Activated CD8-positive, alpha-beta T cell treated with anti-CD3 and anti-CD28 coated beads, Interleukin-2, amount 10 ng/mL, durations not matched to agents 7 days and 5 days (primary cell): ENCODE measurements at regions of chr6 and their contacts with region 1.

Region 1: GRCh38 chr6:24720604-24721460 is 1.9 kb upstream of the C6orf62 start:
- DNase-seq: peak; percentile 100
- ATAC-seq: peak; percentile 90
- H3K4me3 Mint-ChIP-seq: peak overlapping the region; percentile 98
- H3K27ac Mint-ChIP-seq: peak overlapping the region; percentile 99
- H3K4me1 Mint-ChIP-seq: peaks cover 27% of the 10 kb centered on the region
- H3K27me3 Mint-ChIP-seq: no peaks in the 10 kb centered on the region

Region 2: DNA sequence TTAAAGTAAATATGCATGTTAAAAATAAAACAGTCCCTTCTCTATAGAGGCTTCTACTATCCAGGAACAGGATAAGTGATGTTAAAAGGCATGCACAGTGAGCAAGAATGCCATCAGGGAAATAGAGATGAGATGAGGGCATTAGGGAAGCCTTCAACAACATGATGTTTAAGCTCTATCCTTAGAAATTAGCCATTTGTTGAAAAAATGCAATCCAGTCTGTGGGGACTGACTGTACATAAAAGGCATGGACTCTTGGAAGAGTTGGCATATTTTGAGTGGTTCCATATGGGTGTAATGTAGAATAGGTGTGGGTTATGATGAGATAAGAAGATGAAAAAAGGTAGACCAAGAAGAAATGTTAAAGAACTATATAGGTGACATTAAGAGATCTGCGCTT is 80.7 kb before region 1 on chr6:
- CTCF ChIA-PET with region 1: no interaction called
- POLR2A ChIA-PET with region 1: no interaction called
- DNase-seq: no peak
- ATAC-seq: no peak
- H3K4me3 Mint-ChIP-seq: no peak overlapping the region
- H3K27ac Mint-ChIP-seq: no peak overlapping the region
- H3K4me1 Mint-ChIP-seq: peaks cover 4% of the 10 kb centered on the region
- H3K27me3 Mint-ChIP-seq: peaks cover 45% of the 10 kb centered on the region

Region 3: GRCh38 chr6:24666641-24667377 is 54.0 kb before region 1 on chr6 and contains the starts of genes ACOT13 and TDP2:
- CTCF ChIA-PET with region 1: interaction called, 8 read pairs
- POLR2A ChIA-PET with region 1: interaction called, 17 read pairs
- DNase-seq: peak; percentile 97
- ATAC-seq: peak; percentile 96
- H3K4me3 Mint-ChIP-seq: peak within 1 kb of the TSS; percentile 98
- H3K27ac Mint-ChIP-seq: peak within 1 kb of the TSS; percentile 100
- H3K4me1 Mint-ChIP-seq: peaks cover 45% of the 10 kb centered on the region
- H3K27me3 Mint-ChIP-seq: no peaks in the 10 kb centered on the region
- total RNA-seq, gene ACOT13: 21.3 to 22.6 TPM
- total RNA-seq, gene TDP2: 43.0 to 44.0 TPM

Region 4: GRCh38 chr6:24774696-24775519 is 54.1 kb after region 1 on chr6 and contains the start of gene GMNN:
- CTCF ChIA-PET with region 1: interaction called, 4 read pairs
- POLR2A ChIA-PET with region 1: interaction called, 22 read pairs
- DNase-seq: peak; percentile 99
- ATAC-seq: peak; percentile 97
- H3K4me3 Mint-ChIP-seq: peak within 1 kb of the TSS; percentile 99
- H3K27ac Mint-ChIP-seq: peak within 1 kb of the TSS; percentile 100
- H3K4me1 Mint-ChIP-seq: peaks cover 37% of the 10 kb centered on the region
- H3K27me3 Mint-ChIP-seq: no peaks in the 10 kb centered on the region
- total RNA-seq, gene GMNN: 87.0 to 88.4 TPM